A673 (cell line): ENCODE measurements at regions of chr18 and their contacts with region 1.

Region 1: DNA sequence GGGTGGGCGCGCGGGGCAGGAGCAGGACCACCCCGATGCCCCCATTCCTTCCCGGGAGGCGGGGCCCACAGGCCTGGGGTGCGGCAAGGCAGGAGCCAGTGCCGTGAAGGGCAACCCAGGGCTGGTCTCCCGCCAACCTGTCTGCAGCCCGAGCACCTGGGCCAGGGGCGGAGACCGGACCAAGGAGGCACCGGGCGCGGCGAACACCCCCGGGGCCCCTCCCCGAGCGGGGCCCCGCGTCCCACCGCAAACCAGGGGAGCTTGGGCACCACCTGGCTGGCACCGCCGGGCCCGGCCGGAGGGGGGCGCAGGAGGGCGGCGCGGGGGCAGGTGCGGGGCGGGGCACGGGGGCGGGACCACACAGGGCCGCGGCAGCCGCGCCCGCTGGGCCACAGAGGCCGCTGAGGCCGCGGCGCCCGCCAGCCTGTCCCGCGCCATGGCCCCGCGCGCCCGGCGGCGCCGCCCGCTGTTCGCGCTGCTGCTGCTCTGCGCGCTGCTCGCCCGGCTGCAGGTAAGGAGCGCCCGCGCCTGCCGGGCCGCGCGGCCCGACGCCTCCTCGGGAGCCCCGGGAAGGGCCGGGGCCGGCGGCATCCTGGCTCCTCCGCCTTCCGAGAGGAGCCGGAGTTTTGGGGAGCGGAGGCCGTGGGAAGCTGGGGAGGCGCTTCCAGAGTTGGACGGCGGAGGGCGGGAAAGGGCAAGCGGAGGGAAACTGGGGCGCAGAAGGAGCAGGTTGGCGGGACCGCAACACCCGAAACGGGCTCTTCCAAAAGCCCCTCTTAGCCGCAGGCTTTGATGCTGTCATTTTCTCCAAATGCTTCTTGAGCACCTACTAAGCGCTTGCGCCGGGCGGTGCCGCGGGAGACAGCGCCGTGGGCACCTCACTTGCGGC is at the start of gene TNFRSF11A:
- DNase-seq: peak; percentile 33
- H3K4me3 ChIP-seq: peak within 1 kb of the TSS; percentile 56
- H3K27ac ChIP-seq: no peak within 1 kb of the TSS
- H3K4me1 ChIP-seq: no peaks in the 10 kb centered on the region
- H3K27me3 ChIP-seq: peaks cover 56% of the 10 kb centered on the region
- CTCF ChIP-seq: no peak; the same call in 1 of the 2 replicates
- total RNA-seq, gene TNFRSF11A: 0.37 TPM in 2 replicates

Region 2: DNA sequence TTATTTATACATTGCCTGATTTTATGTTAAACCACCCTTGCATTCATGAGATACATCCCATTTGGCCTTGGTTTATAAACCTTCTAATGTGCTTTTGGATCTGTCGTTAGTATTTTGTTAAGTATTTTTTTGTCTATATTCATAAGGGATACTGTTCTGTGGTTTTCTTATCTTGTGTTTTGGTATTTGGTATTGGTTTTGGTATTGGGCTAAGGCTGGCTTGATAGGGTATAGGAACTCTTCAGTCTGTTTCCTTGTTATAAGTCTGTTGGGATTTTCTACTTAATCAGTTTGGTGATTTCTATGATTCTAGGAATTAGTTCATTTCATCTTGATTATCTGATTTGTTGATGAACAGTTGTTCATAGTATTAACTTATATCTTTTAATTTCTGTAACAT is 88.9 kb before region 1 on chr18:
- CTCF ChIA-PET with region 1: interaction called, 14 read pairs
- POLR2A ChIA-PET with region 1: no interaction called
- intact Hi-C with region 1: no loop called
- DNase-seq: no peak
- H3K4me3 ChIP-seq: no peak overlapping the region
- H3K27ac ChIP-seq: no peak overlapping the region
- H3K4me1 ChIP-seq: no peaks in the 10 kb centered on the region
- H3K27me3 ChIP-seq: no peaks in the 10 kb centered on the region
- CTCF ChIP-seq: no peak

Region 3: DNA sequence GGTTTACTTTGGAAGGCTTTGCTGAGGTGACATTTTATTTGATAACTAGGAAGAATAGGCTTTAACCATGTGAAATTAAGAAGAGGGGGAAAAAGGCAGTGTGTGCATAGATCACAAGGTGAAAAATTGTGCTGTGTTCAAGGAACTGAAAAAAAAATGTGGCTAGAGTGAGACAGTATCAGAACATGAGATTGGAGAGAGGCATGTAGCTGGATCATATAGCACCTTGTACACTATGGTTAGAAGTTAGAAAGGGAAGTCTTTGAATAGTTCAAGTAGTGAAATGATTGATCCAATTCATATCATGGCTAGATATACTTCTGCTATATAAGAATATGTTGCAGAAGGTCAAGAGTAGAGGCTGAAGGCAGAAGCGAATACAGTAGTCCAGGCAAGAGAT is 12.3 kb before region 1 on chr18:
- CTCF ChIA-PET with region 1: interaction called, 10 read pairs
- POLR2A ChIA-PET with region 1: no interaction called
- intact Hi-C with region 1: no loop called
- DNase-seq: no peak
- H3K4me3 ChIP-seq: no peak overlapping the region
- H3K27ac ChIP-seq: no peak overlapping the region
- H3K4me1 ChIP-seq: no peaks in the 10 kb centered on the region
- H3K27me3 ChIP-seq: no peaks in the 10 kb centered on the region
- CTCF ChIP-seq: no peak